ENCODE measurements at regions of chr6 and their contacts with region 1.

Region 1: GRCh38 chr6:106325336-106326178 is at the start of gene ATG5:
- DNase-seq: peak; percentile 99 to 100 (median 99)
- H3K4me3 ChIP-seq: peak within 1 kb of the TSS; percentile 87 to 97
- H3K4me3 Mint-ChIP-seq: peak within 1 kb of the TSS; percentile 94 to 100 (median 99)
- H3K27ac ChIP-seq: peak within 1 kb of the TSS; percentile 85
- H3K27ac Mint-ChIP-seq: peak within 1 kb of the TSS; percentile 96 to 99 (median 98)
- H3K4me1 ChIP-seq: peaks cover 33% of the 10 kb centered on the region
- H3K4me1 Mint-ChIP-seq: peaks cover 35 to 48% (median 44%) of the 10 kb centered on the region in 4 donors
- H3K27me3 ChIP-seq: no peaks in the 10 kb centered on the region
- H3K27me3 Mint-ChIP-seq: peaks cover 5 to 7% of the 10 kb centered on the region in 2 donors
- total RNA-seq, gene ATG5: 26.8 to 30.2 TPM

Region 2: DNA sequence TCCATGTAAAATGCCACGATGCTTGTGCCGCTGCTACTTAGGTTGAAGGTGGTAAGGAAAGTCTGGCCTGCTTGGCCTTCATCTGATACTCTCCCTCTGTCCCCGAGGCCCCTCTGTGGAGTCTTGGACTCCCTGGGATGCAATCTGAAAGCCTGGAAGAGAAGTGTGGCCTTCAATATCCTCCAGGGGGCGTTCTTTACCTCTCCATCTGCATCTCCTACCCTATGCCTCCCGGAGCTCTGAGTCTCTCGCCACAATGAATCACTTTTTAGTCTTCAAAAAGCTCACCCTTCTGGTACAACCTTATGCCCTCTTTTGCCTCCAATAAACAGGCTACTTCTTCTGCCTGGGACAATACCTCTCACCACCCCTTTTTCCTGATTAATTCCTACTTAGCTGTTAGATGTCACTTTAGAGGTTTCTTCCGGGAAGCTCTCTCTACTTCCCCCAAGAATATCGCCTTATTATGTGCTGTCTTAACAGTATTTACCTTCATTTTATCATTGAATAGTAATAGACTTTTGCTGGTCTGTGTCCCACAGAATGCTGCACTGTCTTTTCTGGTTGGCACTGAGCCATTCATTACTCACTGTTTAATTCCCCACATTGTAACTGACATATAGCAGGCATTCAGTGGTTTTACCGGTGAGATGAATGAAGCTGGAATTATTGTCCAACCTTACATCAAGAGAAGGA is 13.9 kb after region 1 on chr6:
- CTCF ChIA-PET with region 1: interaction called, 22 read pairs
- POLR2A ChIA-PET with region 1: interaction called, 11 read pairs
- intact Hi-C with region 1: no loop called
- DNase-seq: peak; percentile 28 to 54 (median 44)
- H3K4me3 ChIP-seq: no peak overlapping the region
- H3K4me3 Mint-ChIP-seq: peak overlapping the region in 7 of 8 donors; percentile 4 to 49 (median 29)
- H3K27ac ChIP-seq: no peak overlapping the region
- H3K27ac Mint-ChIP-seq: peak overlapping the region in 2 of 7 donors; percentile 42 to 54
- H3K4me1 ChIP-seq: peaks cover 5% of the 10 kb centered on the region
- H3K4me1 Mint-ChIP-seq: peaks cover 0 to 6% (median 3%) of the 10 kb centered on the region in 4 donors
- H3K27me3 ChIP-seq: no peaks in the 10 kb centered on the region
- H3K27me3 Mint-ChIP-seq: peaks cover 12 to 23% of the 10 kb centered on the region in 2 donors

Region 3: DNA sequence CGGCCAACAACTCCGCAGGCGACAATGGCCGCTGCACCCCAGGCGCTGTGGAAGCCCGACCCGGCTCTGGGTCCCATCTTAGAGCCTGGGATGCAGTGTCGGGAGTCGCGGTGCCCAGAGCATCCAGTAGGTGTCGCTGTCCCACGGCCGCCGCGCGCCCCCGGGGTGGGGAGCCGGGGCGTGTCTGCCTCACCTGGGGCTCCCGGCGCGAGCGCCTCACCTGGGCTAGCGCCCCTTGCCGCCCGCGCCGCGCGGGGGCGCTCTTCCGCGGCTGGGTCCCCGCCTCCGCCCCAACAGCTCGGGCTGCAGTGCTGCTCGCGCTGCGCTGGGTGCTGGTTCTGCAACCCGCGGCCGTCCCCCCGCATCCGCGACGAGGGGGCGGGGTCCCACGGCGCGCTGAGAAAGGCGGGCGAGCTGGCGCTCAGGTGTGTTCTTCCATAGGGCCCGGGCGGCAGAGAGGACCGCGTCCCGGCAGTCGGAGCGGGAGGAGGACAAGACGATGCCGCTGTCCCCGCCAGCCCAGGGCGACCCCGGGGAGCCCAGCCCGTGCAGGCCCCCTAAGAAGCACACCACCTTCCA is 34.9 kb after region 1 on chr6 and contains the start of gene CRYBG1:
- CTCF ChIA-PET with region 1: interaction called, 4 read pairs
- POLR2A ChIA-PET with region 1: interaction called, 3 read pairs
- intact Hi-C with region 1: loop called (anchors 5 kb)
- DNase-seq: peak; percentile 73 to 77 (median 75)
- H3K4me3 ChIP-seq: peak within 1 kb of the TSS; percentile 3 to 52
- H3K4me3 Mint-ChIP-seq: peak within 1 kb of the TSS; percentile 79 to 89 (median 86)
- H3K27ac ChIP-seq: no peak within 1 kb of the TSS
- H3K27ac Mint-ChIP-seq: peak within 1 kb of the TSS in 3 of 7 donors; percentile 15 to 78 (median 53)
- H3K4me1 ChIP-seq: peaks cover 17% of the 10 kb centered on the region
- H3K4me1 Mint-ChIP-seq: peaks cover 4 to 11% (median 9%) of the 10 kb centered on the region in 4 donors
- H3K27me3 ChIP-seq: peaks cover 9% of the 10 kb centered on the region
- H3K27me3 Mint-ChIP-seq: peaks cover 15 to 28% of the 10 kb centered on the region in 2 donors
- total RNA-seq, gene CRYBG1: 45.4 to 47.1 TPM

Region 4: GRCh38 chr6:106370639-106371038 is 45.1 kb after region 1 on chr6:
- CTCF ChIA-PET with region 1: no interaction called
- POLR2A ChIA-PET with region 1: no interaction called
- intact Hi-C with region 1: no loop called
- DNase-seq: no peak
- H3K4me3 ChIP-seq: no peak overlapping the region
- H3K4me3 Mint-ChIP-seq: no peak overlapping the region
- H3K27ac ChIP-seq: no peak overlapping the region
- H3K27ac Mint-ChIP-seq: no peak overlapping the region
- H3K4me1 ChIP-seq: no peaks in the 10 kb centered on the region
- H3K4me1 Mint-ChIP-seq: no peaks in the 10 kb centered on the region
- H3K27me3 ChIP-seq: no peaks in the 10 kb centered on the region
- H3K27me3 Mint-ChIP-seq: peaks cover 3 to 8% of the 10 kb centered on the region in 2 donors

Region 5: GRCh38 chr6:106629103-106629858 is 303.7 kb after region 1 on chr6 and contains the starts of genes QRSL1 and RTN4IP1:
- CTCF ChIA-PET with region 1: no interaction called
- POLR2A ChIA-PET with region 1: interaction called, 3 read pairs
- intact Hi-C with region 1: loop called (anchors 1 kb)
- DNase-seq: peak; percentile 91 to 93 (median 92)
- H3K4me3 ChIP-seq: peak within 1 kb of the TSS; percentile 85 to 88
- H3K4me3 Mint-ChIP-seq: peak within 1 kb of the TSS; percentile 96 to 99 (median 97)
- H3K27ac ChIP-seq: peak within 1 kb of the TSS; percentile 74
- H3K27ac Mint-ChIP-seq: peak within 1 kb of the TSS; percentile 96 to 98 (median 98)
- H3K4me1 ChIP-seq: peaks cover 23% of the 10 kb centered on the region
- H3K4me1 Mint-ChIP-seq: peaks cover 21 to 39% (median 31%) of the 10 kb centered on the region in 4 donors
- H3K27me3 ChIP-seq: no peaks in the 10 kb centered on the region
- H3K27me3 Mint-ChIP-seq: no peaks in the 10 kb centered on the region
- total RNA-seq, gene QRSL1: 12.3 to 13.4 TPM
- total RNA-seq, gene RTN4IP1: 5.8 to 8.3 TPM

Region 6: DNA sequence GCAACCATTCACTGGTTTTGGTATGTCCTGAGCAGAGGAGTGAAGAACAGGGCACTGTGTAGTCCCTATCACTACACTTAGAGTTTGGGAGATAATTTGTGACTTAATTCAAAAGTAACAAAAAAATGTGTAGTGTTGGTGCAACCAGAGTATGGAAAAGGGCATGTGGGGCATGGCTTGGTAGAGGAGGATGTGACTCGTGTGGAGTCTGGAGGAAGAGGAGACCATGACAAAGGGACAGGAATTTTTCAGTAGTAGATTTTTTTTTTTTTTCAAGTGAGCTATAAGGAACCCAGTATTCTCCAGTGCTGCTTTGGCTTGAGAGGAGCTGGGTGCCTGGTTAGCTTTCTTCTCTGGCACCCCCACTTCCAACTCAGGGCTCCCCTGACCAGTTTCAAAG is 707.6 kb after region 1 on chr6:
- CTCF ChIA-PET with region 1: no interaction called
- POLR2A ChIA-PET with region 1: interaction called, 3 read pairs
- intact Hi-C with region 1: loop called (anchors 2 kb)
- DNase-seq: no peak
- H3K4me3 ChIP-seq: no peak overlapping the region
- H3K4me3 Mint-ChIP-seq: no peak overlapping the region
- H3K27ac ChIP-seq: no peak overlapping the region
- H3K27ac Mint-ChIP-seq: peak overlapping the region in 1 of 7 donors; percentile 19
- H3K4me1 ChIP-seq: peaks cover 15% of the 10 kb centered on the region
- H3K4me1 Mint-ChIP-seq: peaks cover 25 to 52% (median 32%) of the 10 kb centered on the region in 4 donors
- H3K27me3 ChIP-seq: no peaks in the 10 kb centered on the region
- H3K27me3 Mint-ChIP-seq: no peaks in the 10 kb centered on the region

Measured in CD4-positive, alpha-beta memory T cell (primary cell).